PC-9 (cell line): ENCODE measurements at regions of chr5 and their contacts with region 1.

Region 1: GRCh38 chr5:39547553-39548154 is 122.9 kb upstream of the DAB2 start:
- DNase-seq: peak; percentile 50
- H3K4me3 ChIP-seq: no peak overlapping the region
- H3K27ac ChIP-seq: no peak overlapping the region
- H3K4me1 ChIP-seq: peaks cover 16% of the 10 kb centered on the region
- H3K27me3 ChIP-seq: no peaks in the 10 kb centered on the region
- CTCF ChIP-seq: peak; percentile 95

Region 2: GRCh38 chr5:39148983-39149534 is 398.6 kb before region 1 on chr5:
- CTCF ChIA-PET with region 1: interaction called, 4 read pairs
- POLR2A ChIA-PET with region 1: no interaction called
- intact Hi-C with region 1: loop called (anchors 2 kb)
- DNase-seq: no peak
- H3K4me3 ChIP-seq: no peak overlapping the region
- H3K27ac ChIP-seq: no peak overlapping the region; the same call in 1 of the 2 replicates
- H3K4me1 ChIP-seq: peaks cover 6% of the 10 kb centered on the region
- H3K27me3 ChIP-seq: no peaks in the 10 kb centered on the region
- CTCF ChIP-seq: peak; percentile 76

Region 3: GRCh38 chr5:39194466-39195136 is 353.1 kb before region 1 on chr5:
- CTCF ChIA-PET with region 1: interaction called, 10 read pairs
- POLR2A ChIA-PET with region 1: no interaction called
- intact Hi-C with region 1: no loop called
- DNase-seq: peak; percentile 78 to 93
- H3K4me3 ChIP-seq: peak overlapping the region; percentile 13; the same call in 1 of the 2 replicates
- H3K27ac ChIP-seq: peak overlapping the region; percentile 91
- H3K4me1 ChIP-seq: peaks cover 56% of the 10 kb centered on the region
- H3K27me3 ChIP-seq: no peaks in the 10 kb centered on the region
- CTCF ChIP-seq: no peak

Region 4: GRCh38 chr5:39283231-39283818 is 264.3 kb before region 1 on chr5:
- CTCF ChIA-PET with region 1: interaction called, 5 read pairs
- POLR2A ChIA-PET with region 1: no interaction called
- intact Hi-C with region 1: loop called (anchors 1 kb)
- DNase-seq: peak; percentile 61 to 64
- H3K4me3 ChIP-seq: no peak overlapping the region
- H3K27ac ChIP-seq: no peak overlapping the region
- H3K4me1 ChIP-seq: no peaks in the 10 kb centered on the region
- H3K27me3 ChIP-seq: no peaks in the 10 kb centered on the region
- CTCF ChIP-seq: peak; percentile 91

Region 5: DNA sequence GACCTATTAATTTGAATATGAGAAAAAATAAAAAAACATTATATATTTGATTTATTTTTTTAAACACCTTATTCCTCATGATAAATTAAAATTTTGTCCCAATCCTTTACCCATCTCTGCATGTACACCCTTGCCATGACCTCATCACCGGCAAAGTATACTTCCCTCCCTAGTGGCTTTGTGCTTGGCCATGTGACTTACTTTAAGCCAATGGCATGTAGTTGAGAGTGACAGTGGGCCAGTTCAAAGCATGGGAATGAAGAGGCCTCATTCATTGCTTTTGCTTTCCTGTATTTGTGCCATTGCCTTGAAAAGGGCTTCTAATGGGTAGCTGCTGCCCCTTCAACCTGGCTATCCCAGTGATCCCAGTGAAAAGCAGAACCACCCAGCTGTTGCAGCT is 214.6 kb before region 1 on chr5:
- CTCF ChIA-PET with region 1: no interaction called
- POLR2A ChIA-PET with region 1: no interaction called
- intact Hi-C with region 1: no loop called
- DNase-seq: no peak
- H3K4me3 ChIP-seq: no peak overlapping the region
- H3K27ac ChIP-seq: no peak overlapping the region
- H3K4me1 ChIP-seq: no peaks in the 10 kb centered on the region
- H3K27me3 ChIP-seq: no peaks in the 10 kb centered on the region
- CTCF ChIP-seq: no peak

Region 6: DNA sequence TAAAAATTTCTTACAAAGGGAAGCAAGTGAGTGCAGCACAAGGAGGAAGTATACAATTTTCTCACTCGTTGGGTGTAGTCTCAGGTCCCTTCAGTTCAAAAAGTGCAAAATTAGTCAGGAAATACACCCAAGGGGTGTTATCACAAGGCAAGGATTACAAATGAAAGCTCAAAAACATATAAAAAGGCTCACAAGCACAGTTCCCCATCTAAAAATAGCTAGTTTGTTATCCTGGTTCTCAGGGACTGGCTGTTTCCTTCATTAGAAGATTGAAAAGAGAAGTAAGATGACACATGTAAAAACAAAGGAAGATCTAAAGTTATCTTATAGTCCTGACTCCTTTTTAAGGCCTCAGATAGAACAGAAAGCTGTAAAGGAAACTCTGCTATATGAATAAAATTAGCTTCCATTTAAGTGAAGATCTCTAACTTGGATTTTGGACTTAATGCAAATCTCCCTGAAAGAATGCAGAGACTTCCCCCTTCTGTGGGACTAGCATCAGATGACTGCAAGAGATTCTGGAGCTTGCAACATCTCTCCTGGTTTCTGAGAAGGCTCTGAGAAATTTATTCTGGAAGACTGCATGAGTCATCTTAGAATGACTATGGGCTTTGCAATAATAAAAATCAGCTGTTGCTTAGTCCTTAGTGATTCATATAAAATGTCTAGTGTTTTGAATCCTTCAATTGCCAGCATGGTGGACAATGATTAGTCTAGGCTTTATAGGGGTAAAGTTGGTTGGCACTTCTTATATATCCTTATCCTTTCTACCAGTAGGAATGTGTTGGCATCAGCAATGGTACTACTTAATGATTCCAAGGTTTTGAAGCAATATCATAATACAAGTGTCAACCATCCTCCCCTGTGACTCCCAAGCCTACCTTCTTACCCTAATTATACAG is 148.3 kb before region 1 on chr5:
- CTCF ChIA-PET with region 1: interaction called, 10 read pairs
- POLR2A ChIA-PET with region 1: interaction called, 3 read pairs
- intact Hi-C with region 1: no loop called
- DNase-seq: peak; percentile 60 to 97
- H3K4me3 ChIP-seq: no peak overlapping the region
- H3K27ac ChIP-seq: peak overlapping the region; percentile 90
- H3K4me1 ChIP-seq: peaks cover 31% of the 10 kb centered on the region
- H3K27me3 ChIP-seq: no peaks in the 10 kb centered on the region
- CTCF ChIP-seq: no peak

Region 7: DNA sequence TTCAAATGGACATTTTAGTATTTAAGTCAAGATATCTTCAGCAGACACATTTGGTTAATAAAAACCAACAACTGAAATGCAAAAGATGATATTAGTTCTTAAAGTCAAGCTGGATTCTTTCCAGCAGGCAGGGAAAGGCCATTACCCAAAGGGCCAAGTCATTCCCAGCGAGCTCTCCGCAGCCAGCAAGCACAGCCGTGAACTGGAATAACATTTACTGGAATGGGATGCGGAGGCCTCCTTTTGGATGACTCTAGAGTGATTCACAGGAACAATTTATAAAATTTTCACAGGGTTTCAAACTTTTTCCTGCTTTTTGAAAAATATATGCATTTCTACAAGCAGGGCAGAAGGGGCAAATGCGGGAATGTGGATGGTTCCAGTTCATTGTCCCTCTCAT is 46.3 kb before region 1 on chr5:
- CTCF ChIA-PET with region 1: interaction called, 10 read pairs
- POLR2A ChIA-PET with region 1: no interaction called
- intact Hi-C with region 1: no loop called
- DNase-seq: peak in 1 of 2 experiments; percentile 31
- H3K4me3 ChIP-seq: no peak overlapping the region
- H3K27ac ChIP-seq: no peak overlapping the region
- H3K4me1 ChIP-seq: peaks cover 11% of the 10 kb centered on the region
- H3K27me3 ChIP-seq: no peaks in the 10 kb centered on the region
- CTCF ChIP-seq: no peak

Region 8: DNA sequence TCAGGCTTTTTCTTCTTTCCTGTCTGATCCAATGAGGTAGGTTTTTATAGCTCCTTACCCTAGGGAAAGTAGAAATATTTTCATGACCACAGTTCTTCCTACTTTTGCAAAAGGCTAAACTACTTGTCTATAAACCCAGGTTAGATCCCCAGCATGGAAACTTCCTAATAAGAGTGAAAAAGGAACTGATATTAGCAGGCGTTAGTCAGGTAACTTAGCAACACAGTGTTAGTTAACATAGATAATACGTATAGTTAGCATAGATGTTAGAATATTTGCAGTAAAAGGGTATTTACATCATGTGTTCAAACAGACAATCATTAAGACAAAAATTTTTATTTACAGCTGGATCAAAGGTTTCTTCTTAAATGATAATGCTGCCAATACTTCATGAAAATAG is 40.0 kb after region 1 on chr5:
- CTCF ChIA-PET with region 1: no interaction called
- POLR2A ChIA-PET with region 1: no interaction called
- intact Hi-C with region 1: no loop called
- DNase-seq: no peak
- H3K4me3 ChIP-seq: no peak overlapping the region
- H3K27ac ChIP-seq: no peak overlapping the region
- H3K4me1 ChIP-seq: no peaks in the 10 kb centered on the region
- H3K27me3 ChIP-seq: no peaks in the 10 kb centered on the region
- CTCF ChIP-seq: no peak